Right ventricle myocardium inferior (tissue), 1 donor: ENCODE measurements at regions of chr2 and their contacts with region 1.

Region 1: GRCh38 chr2:1546023-1546591 is 132.8 kb downstream of the TPO start:
- DNase-seq: no peak
- ATAC-seq: no peak

Region 2: GRCh38 chr2:714005-714741 is 831.9 kb before region 1 on chr2:
- intact Hi-C with region 1: loop called (anchors 5 kb)
- DNase-seq: no peak
- ATAC-seq: no peak

Region 3: DNA sequence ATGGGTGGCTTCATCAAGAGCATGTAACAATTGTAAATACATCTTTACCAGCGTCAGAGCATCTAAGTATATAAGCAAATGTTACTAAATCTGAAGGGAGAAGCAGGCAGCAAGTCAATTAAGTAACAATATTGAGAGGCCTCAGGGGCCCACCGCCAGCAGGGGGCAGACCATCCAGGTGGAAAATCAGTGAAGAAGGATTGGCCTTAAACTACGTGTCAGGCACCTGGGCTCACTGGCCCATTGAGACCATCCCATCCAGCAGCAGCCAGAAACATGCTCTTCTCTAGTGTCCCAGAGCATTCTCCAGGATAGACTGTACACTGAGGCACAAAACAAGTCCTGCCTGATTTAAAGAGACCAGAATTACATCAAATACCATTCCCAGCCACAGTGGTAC is 691.6 kb before region 1 on chr2:
- intact Hi-C with region 1: loop called (anchors 5 kb)
- DNase-seq: no peak
- ATAC-seq: no peak

Region 4: GRCh38 chr2:950080-950966 is 595.8 kb before region 1 on chr2 and contains the start of gene SNTG2:
- intact Hi-C with region 1: loop called (anchors 5 kb)
- DNase-seq: no peak
- ATAC-seq: peak; percentile 42
- total RNA-seq, gene SNTG2: 2.4 TPM

Region 5: DNA sequence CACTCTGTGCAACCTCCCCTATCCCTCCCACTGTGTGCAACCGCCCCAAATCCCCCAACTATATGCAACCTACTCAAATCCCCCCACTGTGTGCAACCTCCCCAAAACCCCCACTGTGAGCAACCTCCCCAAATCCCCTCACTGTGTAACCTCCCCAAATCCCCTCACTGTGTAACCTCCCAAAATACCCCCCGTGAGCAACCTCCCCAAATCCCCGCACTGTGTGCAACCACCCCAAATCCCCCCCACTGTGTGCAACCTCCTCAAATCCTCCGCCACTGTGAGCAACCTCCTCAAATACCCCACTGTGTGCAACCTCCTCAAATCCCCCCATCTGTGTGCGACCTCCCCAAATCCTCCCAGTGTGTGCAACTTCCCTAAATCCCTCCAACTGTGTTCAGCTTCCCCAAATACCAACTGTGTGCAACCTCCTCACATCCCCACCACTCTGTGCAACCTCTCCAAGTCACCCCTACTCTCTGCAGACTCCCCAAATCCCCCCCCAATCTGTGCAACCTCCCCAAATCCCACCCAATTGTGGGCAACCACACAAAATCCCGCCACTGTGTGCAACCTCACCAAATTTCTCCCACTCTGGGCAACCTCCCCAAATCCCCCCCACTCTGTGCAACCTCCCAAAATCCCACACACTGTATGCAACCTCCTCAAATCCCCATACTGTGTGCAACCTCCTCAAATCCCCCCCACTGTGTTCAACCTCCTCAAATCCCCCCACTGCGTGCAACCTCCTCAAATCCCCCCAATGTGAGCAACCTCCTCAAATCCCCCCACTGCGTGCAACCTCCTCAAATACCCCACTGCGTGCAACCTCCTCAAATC is 18.7 kb before region 1 on chr2:
- intact Hi-C with region 1: no loop called
- DNase-seq: no peak
- ATAC-seq: no peak

Region 6: DNA sequence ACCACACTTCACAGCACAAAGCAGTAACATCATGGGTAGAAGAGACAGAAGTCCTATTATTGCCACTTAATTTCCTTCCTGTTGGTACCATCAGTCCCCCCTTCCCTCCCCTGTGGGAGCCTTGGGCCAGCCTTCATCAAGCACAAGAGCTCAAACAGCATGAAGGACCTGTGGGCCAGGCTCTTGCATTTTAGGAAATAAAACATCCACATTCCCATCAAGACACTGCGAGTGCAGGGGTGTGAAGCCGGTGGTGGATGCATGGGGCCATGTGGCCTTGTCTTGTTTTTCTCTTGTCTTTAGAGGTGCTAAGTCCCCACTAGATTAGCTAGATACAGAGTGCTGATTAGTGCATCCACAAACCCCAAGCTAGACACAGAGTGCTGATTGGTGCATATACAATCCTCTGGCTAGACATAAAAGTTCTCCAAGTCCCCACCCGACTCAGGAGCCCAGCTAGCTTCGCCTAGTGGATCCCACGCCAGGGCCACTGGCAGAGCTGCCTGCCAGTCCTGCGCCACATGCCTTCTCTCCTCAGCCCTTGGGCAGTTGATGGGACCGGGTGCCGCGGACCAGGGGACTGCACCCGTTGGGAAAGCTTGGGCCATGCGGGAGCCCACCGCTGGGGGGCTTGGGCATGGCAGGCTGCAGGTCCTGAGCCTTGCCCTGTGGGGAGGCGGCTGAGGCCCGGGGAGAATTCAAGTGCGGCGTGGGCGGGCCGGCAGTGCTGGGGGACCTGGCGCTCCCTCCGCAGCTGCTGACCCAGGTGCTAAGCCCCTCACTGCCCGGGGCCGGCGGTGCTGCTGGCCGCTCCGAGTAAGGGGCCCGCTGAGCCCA is 212.9 kb after region 1 on chr2:
- intact Hi-C with region 1: no loop called
- DNase-seq: no peak
- ATAC-seq: no peak